ENCODE measurements at regions of chr13 and their contacts with region 1.

Region 1: GRCh38 chr13:44917589-44918325 is 71.5 kb downstream of the NUFIP1 start:
- DNase-seq: peak; percentile 94 to 98 (median 96)
- H3K4me3 ChIP-seq: peak overlapping the region; percentile 62 to 82 (median 78)
- H3K4me3 Mint-ChIP-seq: no peak overlapping the region
- H3K27ac ChIP-seq: peak overlapping the region; percentile 82 to 93
- H3K27ac Mint-ChIP-seq: no peak overlapping the region
- H3K4me1 ChIP-seq: peaks cover 14 to 20% of the 10 kb centered on the region in 2 donors
- H3K4me1 Mint-ChIP-seq: no peaks in the 10 kb centered on the region
- H3K27me3 ChIP-seq: no peaks in the 10 kb centered on the region
- H3K27me3 Mint-ChIP-seq: peaks cover 0 to 2% (median 0%) of the 10 kb centered on the region in 3 donors
- CTCF ChIP-seq: no peak

Region 2: GRCh38 chr13:44465318-44465717 is 452.4 kb before region 1 on chr13:
- intact Hi-C with region 1: no loop called
- DNase-seq: no peak
- H3K4me3 ChIP-seq: no peak overlapping the region
- H3K4me3 Mint-ChIP-seq: no peak overlapping the region
- H3K27ac ChIP-seq: no peak overlapping the region
- H3K27ac Mint-ChIP-seq: peak overlapping the region in 1 of 7 donors; percentile 46
- H3K4me1 ChIP-seq: no peaks in the 10 kb centered on the region
- H3K4me1 Mint-ChIP-seq: no peaks in the 10 kb centered on the region
- H3K27me3 ChIP-seq: no peaks in the 10 kb centered on the region
- H3K27me3 Mint-ChIP-seq: no peaks in the 10 kb centered on the region
- CTCF ChIP-seq: no peak

Region 3: GRCh38 chr13:44988973-44989817 is 71.4 kb after region 1 on chr13 and contains the starts of genes GPALPP1 and NUFIP1:
- intact Hi-C with region 1: loop called (anchors 5 kb)
- DNase-seq: peak; percentile 92 to 98 (median 96)
- H3K4me3 ChIP-seq: peak within 1 kb of the TSS; percentile 80 to 94 (median 92)
- H3K4me3 Mint-ChIP-seq: peak within 1 kb of the TSS; percentile 92 to 97
- H3K27ac ChIP-seq: peak within 1 kb of the TSS; percentile 72 to 99
- H3K27ac Mint-ChIP-seq: peak within 1 kb of the TSS; percentile 95 to 100 (median 98)
- H3K4me1 ChIP-seq: peaks cover 21 to 26% of the 10 kb centered on the region in 2 donors
- H3K4me1 Mint-ChIP-seq: peaks cover 28% of the 10 kb centered on the region
- H3K27me3 ChIP-seq: no peaks in the 10 kb centered on the region
- H3K27me3 Mint-ChIP-seq: peaks cover 0 to 1% (median 0%) of the 10 kb centered on the region in 3 donors
- CTCF ChIP-seq: no peak
- polyA plus RNA-seq, gene GPALPP1: 9.4 to 13.7 (median 11.4) TPM
- polyA plus RNA-seq, gene NUFIP1: 0.83 to 1.1 (median 0.95) TPM

Region 4: DNA sequence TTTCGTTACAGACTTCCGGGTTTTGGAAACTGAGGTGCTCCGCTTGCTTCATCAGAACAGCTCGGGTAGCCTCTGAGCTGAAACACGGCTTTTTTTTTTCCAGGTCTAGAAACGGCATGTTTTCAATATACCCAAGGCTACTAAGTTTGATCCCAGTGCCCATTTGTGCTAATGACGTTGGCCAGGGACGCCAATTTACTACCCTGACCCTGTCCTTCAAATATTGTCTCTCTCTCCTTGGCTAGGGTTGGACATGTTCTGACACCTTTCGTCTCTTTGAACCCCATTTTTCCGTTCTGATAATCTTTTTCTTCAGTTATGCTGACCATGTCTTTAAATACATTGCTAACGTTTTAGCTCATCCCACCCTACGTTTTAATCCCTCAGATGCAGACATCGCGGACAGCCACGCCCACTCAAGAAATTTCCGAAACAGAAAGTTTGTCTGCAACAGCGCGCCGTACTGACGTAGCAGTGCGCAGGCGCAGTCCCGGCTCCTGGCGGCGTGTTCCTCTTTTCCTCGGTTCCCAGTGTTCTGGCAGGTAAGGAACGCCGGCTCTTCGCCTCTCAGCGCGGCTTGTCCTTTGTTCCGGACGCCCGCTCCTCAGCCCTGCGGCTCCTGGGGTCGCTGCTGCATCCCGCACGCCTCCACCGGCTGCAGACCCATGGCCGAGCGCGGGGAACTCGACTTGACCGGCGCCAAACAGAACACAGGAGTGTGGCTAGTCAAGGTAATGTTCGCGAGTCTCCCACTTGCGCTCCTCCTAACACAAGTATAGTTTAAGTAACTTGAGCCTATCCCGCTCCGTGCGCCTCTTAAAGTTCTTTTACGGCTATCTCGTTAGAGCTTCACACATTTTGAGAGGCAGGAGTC is 202.5 kb after region 1 on chr13 and contains the start of gene GTF2F2:
- intact Hi-C with region 1: loop called in 1 of 2 experiments (anchors 10 kb)
- DNase-seq: peak; percentile 86 to 95 (median 91)
- H3K4me3 ChIP-seq: peak within 1 kb of the TSS; percentile 75 to 89 (median 81)
- H3K4me3 Mint-ChIP-seq: no peak within 1 kb of the TSS
- H3K27ac ChIP-seq: peak within 1 kb of the TSS; percentile 65 to 95
- H3K27ac Mint-ChIP-seq: no peak within 1 kb of the TSS
- H3K4me1 ChIP-seq: peaks cover 17 to 24% of the 10 kb centered on the region in 2 donors
- H3K4me1 Mint-ChIP-seq: peaks cover 6% of the 10 kb centered on the region
- H3K27me3 ChIP-seq: no peaks in the 10 kb centered on the region
- H3K27me3 Mint-ChIP-seq: no peaks in the 10 kb centered on the region
- CTCF ChIP-seq: no peak
- polyA plus RNA-seq, gene GTF2F2: 8.1 to 10.4 (median 8.5) TPM

Measured in CD14-positive monocyte (primary cell).